Calu3 (cell line): ENCODE measurements at regions of chr21 and their contacts with region 1.

Region 1: GRCh38 chr21:34881894-34882371 is 167.2 kb downstream of the RUNX1 start:
- DNase-seq: no peak
- H3K4me3 Mint-ChIP-seq: peak overlapping the region; percentile 65
- H3K27ac Mint-ChIP-seq: peak overlapping the region; percentile 86
- H3K4me1 Mint-ChIP-seq: peaks cover 34% of the 10 kb centered on the region
- H3K27me3 Mint-ChIP-seq: no peaks in the 10 kb centered on the region
- CTCF ChIP-seq: no peak

Region 2: DNA sequence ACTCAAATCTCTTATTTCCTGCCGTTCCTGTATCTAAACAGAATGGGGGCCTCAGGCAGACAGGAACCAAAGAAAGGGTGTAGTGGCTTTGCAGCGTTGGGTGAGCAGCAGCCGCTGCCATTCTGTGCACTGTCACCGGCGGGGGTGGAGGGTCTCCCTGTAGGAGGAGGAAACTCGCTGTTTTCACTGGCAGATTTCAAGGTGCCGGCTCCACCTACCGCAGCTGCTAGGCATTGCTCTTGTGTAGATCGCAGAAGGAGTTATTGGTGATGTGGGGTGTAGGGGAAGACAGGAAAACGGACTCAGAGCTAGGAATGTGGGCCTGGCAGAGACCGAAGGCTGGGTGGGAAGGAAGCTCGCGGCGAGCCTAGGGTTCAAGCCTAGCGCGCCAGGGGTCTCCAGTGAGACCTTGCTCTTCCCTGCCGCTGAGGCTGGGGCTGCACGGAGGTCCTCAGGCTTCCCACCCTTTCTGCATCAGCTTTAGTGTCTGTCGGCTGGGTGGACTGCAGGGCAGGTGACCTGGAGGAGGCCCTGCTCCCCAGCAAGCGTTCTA is 987.1 kb before region 1 on chr21:
- CTCF ChIA-PET with region 1: no interaction called
- intact Hi-C with region 1: no loop called
- DNase-seq: peak; percentile 71
- H3K4me3 Mint-ChIP-seq: peak overlapping the region; percentile 62
- H3K27ac Mint-ChIP-seq: peak overlapping the region; percentile 60
- H3K4me1 Mint-ChIP-seq: peaks cover 13% of the 10 kb centered on the region
- H3K27me3 Mint-ChIP-seq: no peaks in the 10 kb centered on the region
- CTCF ChIP-seq: peak; percentile 22

Region 3: GRCh38 chr21:34745557-34746255 is 136.2 kb before region 1 on chr21:
- CTCF ChIA-PET with region 1: interaction called, 8 read pairs
- intact Hi-C with region 1: loop called (anchors 5 kb)
- DNase-seq: peak; percentile 70
- H3K4me3 Mint-ChIP-seq: peak overlapping the region; percentile 37
- H3K27ac Mint-ChIP-seq: peak overlapping the region; percentile 58
- H3K4me1 Mint-ChIP-seq: peaks cover 30% of the 10 kb centered on the region
- H3K27me3 Mint-ChIP-seq: no peaks in the 10 kb centered on the region
- CTCF ChIP-seq: peak; percentile 63

Region 4: GRCh38 chr21:34807146-34807880 is 74.6 kb before region 1 on chr21:
- CTCF ChIA-PET with region 1: no interaction called
- intact Hi-C with region 1: loop called (anchors 5 kb)
- DNase-seq: peak; percentile 51
- H3K4me3 Mint-ChIP-seq: no peak overlapping the region
- H3K27ac Mint-ChIP-seq: peak overlapping the region; percentile 87
- H3K4me1 Mint-ChIP-seq: peaks cover 70% of the 10 kb centered on the region
- H3K27me3 Mint-ChIP-seq: no peaks in the 10 kb centered on the region
- CTCF ChIP-seq: no peak

Region 5: DNA sequence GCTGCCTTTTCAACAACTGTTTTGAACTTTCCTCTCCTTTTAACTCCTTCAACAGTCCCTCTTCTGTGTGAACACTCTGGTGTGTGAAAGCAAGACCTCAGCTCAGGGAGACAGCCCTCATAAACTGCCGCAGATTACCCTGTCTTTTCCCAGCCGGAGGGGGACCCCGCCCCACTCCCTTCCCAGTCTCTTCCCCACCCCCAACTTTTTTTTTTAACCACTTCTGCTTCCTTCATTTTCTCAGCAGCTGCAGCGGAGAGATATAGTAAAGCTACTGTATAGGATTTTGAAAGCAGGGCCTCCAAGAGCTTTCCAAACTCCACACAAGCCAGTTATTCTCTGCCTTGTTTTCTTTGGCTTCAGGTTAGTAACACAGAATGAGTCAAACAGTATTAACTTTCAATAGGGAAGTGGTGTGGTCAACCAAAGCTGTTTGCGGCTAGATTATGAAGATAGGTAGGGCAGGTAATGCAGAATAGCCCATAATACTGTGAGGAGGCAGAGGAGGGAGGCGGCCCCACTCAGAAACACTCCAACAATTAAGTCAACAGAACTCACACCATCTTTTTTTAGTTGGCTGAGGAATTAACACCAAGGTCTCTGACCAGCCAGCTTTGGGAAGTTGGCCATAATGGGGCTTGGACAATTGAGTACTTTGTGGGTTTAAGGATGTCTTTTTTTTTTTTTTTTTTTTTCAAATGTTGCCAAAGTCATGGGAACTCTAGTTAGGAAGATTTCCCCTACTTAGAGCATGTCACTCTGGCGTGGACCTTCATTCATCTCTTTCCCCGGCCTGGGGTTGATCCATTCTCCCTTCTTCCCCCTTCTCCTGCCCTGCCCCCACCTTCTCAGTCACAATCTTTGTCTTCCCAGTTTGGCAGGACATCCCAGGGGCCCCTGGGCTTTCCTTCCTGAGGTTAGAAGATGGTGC is 36.1 kb before region 1 on chr21:
- CTCF ChIA-PET with region 1: interaction called, 6 read pairs
- intact Hi-C with region 1: loop called (anchors 5 kb)
- DNase-seq: peak; percentile 59
- H3K4me3 Mint-ChIP-seq: peak overlapping the region; percentile 27
- H3K27ac Mint-ChIP-seq: peak overlapping the region; percentile 71
- H3K4me1 Mint-ChIP-seq: peaks cover 51% of the 10 kb centered on the region
- H3K27me3 Mint-ChIP-seq: no peaks in the 10 kb centered on the region
- CTCF ChIP-seq: no peak

Region 6: DNA sequence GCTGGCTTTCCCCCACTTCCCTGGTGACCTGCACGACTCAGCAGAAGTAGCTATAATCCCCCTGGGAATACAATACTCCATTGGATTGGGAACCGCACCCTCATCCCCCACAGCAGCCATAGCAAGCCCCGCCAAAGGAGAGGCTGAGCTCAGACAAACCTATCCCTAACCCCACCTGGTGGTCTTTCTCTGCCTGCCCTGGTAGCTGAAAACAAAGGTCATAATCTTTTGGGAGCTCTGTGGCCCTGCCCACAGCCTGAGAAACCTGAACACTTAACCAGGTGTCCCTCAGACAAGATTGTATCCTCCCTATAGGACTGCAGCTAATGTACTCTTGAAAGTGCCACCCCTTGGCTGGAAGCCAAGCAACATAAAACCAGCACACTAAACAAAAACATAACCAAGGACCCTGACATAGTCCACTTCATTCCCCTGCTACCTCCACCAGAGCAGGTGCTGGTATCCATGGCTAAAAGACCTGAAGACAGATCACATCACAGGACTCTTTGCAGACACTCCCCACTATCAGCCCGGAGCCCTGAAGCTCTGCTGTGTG is 238.8 kb after region 1 on chr21:
- CTCF ChIA-PET with region 1: no interaction called
- intact Hi-C with region 1: no loop called
- DNase-seq: no peak
- H3K4me3 Mint-ChIP-seq: no peak overlapping the region
- H3K27ac Mint-ChIP-seq: no peak overlapping the region
- H3K4me1 Mint-ChIP-seq: no peaks in the 10 kb centered on the region
- H3K27me3 Mint-ChIP-seq: no peaks in the 10 kb centered on the region
- CTCF ChIP-seq: no peak